ENCODE measurements at regions of chr12 and their contacts with region 1.

Region 1: GRCh38 chr12:49740930-49741881 is at the start of gene TMBIM6:
- DNase-seq: peak; percentile 99 to 100 (median 100)
- ATAC-seq: peak; percentile 96 to 99 (median 98)
- H3K4me3 ChIP-seq: peak within 1 kb of the TSS; percentile 50 to 90 (median 78)
- H3K27ac ChIP-seq: peak within 1 kb of the TSS; percentile 92 to 99 (median 97)
- H3K4me1 ChIP-seq: peaks cover 20 to 47% (median 37%) of the 10 kb centered on the region in 12 donors
- H3K27me3 ChIP-seq: no peaks in the 10 kb centered on the region
- CTCF ChIP-seq: peak; percentile 89 to 99 (median 96)
- POLR2A ChIP-seq: peak; percentile 64 to 92
- total RNA-seq, gene TMBIM6: 203 to 376 (median 252) TPM

Region 2: DNA sequence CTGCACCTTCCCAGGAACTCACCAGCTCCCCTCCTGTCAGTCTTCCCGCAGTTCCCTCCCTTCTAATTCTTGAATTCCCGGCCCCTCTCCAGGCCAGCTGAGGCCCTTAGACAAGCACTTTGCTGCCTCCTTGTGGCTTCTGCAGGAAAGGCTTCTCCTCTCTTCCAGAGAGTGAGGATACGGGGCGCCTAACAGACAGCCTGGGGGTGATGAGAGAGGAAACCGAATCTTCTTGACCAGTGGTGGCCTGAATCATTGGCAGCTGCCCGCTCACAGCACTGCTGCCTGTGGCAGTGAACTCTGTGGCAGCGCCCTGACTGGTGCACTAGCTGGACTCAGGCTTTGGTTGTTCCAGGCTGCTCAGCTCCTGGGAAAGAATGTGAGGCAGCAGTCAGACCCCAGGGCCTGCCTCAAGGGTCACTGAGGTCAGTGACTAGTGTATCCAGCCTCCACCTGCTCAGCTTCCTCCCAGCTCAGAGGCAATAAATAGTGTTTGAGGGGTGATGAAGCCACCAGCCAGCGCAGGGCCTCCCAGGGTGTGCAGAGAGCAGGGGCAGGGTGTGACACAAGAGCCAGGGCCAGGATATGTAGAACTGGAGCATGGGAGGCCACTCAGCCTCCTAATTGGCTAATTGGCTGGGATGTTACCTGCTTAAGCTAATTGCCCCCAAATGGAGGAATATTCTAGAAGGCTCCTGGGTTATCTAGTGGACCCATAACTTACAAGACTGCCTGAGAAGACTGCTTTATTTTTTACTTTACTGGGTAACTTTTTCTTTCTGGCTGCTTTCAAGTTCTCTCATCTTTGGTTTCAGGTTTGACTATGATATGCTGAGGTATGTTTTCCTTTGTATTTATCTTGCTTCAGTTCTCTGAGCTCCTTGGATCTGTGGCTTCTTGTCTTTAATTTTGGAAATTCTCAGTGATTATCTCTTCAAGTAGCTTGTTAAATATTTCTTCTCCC is 160.4 kb before region 1 on chr12:
- intact Hi-C with region 1: no loop called
- DNase-seq: peak in 4 of 5 donors; percentile 76 to 83 (median 80)
- ATAC-seq: peak; percentile 68 to 80 (median 79)
- H3K4me3 ChIP-seq: no peak overlapping the region
- H3K27ac ChIP-seq: peak overlapping the region in 9 of 12 donors; percentile 16 to 77 (median 36)
- H3K4me1 ChIP-seq: peaks cover 0 to 57% (median 30%) of the 10 kb centered on the region in 12 donors
- H3K27me3 ChIP-seq: no peaks in the 10 kb centered on the region
- CTCF ChIP-seq: peak; percentile 67 to 88 (median 79)
- POLR2A ChIP-seq: no peak

Region 3: GRCh38 chr12:49644620-49644994 is 96.6 kb before region 1 on chr12:
- intact Hi-C with region 1: no loop called
- DNase-seq: peak; percentile 78 to 89 (median 84)
- ATAC-seq: peak; percentile 71 to 82 (median 78)
- H3K4me3 ChIP-seq: no peak overlapping the region
- H3K27ac ChIP-seq: peak overlapping the region in 8 of 12 donors; percentile 23 to 79 (median 48)
- H3K4me1 ChIP-seq: peaks cover 0 to 55% (median 40%) of the 10 kb centered on the region in 12 donors
- H3K27me3 ChIP-seq: no peaks in the 10 kb centered on the region
- CTCF ChIP-seq: peak; percentile 89 to 98 (median 94)
- POLR2A ChIP-seq: no peak

Region 4: DNA sequence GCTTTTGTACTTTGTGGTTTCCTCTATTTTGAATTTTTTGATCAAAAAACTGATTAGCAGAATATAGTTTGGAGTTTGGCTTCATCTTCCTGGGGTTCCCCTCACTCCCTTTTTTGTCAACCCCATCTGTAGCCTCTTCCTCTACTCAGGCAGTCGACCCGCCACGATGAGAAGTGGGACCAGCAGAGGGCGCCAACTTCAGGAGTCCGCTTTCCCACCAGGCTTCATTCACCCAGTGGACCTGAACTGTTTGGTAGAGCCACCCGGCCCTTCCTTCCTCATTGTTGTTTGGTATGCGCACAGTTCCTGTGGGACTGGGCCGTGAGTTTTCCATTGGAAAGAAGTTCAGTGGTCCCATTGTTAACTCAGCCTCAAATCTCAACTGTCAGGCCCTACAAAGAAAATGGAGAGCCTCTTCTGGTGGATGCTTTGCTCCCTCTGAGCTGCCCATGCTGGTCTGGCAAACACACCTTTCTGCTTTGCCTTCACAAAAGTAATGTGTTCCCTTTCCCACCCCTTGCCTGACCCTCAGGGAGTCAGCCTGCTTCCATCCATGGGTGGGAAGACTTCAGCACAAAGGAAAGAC is 21.9 kb after region 1 on chr12:
- intact Hi-C with region 1: loop called in 1 of 10 experiments (anchors 2 kb)
- DNase-seq: peak; percentile 72 to 86 (median 80)
- ATAC-seq: peak; percentile 60 to 82 (median 70)
- H3K4me3 ChIP-seq: no peak overlapping the region
- H3K27ac ChIP-seq: peak overlapping the region in 11 of 12 donors; percentile 2 to 74 (median 41)
- H3K4me1 ChIP-seq: peaks cover 0 to 27% (median 8%) of the 10 kb centered on the region in 12 donors
- H3K27me3 ChIP-seq: no peaks in the 10 kb centered on the region
- CTCF ChIP-seq: peak; percentile 67 to 88 (median 73)
- POLR2A ChIP-seq: no peak

Region 5: GRCh38 chr12:49776413-49776812 is 35.2 kb after region 1 on chr12:
- intact Hi-C with region 1: loop called in 1 of 10 experiments (anchors 5 kb)
- DNase-seq: peak; percentile 52 to 79 (median 71)
- ATAC-seq: peak; percentile 61 to 94 (median 89)
- H3K4me3 ChIP-seq: no peak overlapping the region
- H3K27ac ChIP-seq: no peak overlapping the region
- H3K4me1 ChIP-seq: peaks cover 0 to 7% (median 0%) of the 10 kb centered on the region in 12 donors
- H3K27me3 ChIP-seq: no peaks in the 10 kb centered on the region
- CTCF ChIP-seq: peak; percentile 63 to 85 (median 80)
- POLR2A ChIP-seq: no peak

Measured in heart left ventricle (tissue), 16 donors.